Activated naive CD4-positive, alpha-beta T cell treated with anti-CD3 and anti-CD28 coated beads for 36 hours (primary cell): ENCODE measurements at regions of chr5 and their contacts with region 1.

Region 1: DNA sequence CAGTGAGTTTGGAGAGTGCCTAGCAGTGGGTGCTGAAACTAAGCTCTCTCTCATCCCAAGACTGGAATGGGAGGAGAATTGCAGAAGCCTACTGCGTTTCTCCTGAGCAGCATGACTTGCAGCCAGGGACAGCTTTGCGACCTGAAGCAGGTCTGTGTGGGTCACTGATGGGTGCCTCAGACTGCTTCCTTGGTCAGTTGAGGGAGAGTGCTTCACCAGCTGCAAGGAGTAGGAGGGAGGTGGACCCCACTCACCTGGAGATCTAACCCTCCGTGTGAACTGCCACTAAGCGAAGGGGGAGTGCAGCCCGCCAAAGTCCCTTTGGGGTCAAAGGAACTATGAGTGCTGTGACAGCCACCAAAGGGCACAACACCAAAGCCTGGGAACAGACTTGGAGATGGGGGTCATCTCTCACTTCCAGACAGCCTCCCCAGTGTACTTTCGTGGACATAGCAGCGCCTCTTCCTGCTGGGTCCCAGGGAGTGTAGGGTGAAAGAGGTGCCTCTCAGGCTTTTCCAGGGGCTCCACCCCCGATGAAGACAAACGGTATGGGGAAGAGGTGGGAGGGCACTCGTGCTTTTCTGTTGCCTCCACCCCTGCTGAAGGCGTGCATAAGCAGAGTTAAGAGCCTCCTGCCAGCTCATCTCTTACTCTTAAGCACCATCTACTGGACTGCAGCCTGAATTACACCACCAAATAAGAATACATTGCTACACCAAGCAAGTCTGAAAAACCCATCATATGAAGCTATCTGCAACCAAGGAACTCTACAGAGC is 34.3 kb upstream of the MACIR start:
- DNase-seq: peak; percentile 44
- H3K4me3 Mint-ChIP-seq: no peak overlapping the region
- H3K27ac Mint-ChIP-seq: no peak overlapping the region
- H3K4me1 Mint-ChIP-seq: no peaks in the 10 kb centered on the region
- H3K27me3 Mint-ChIP-seq: peaks cover 15% of the 10 kb centered on the region

Region 2: DNA sequence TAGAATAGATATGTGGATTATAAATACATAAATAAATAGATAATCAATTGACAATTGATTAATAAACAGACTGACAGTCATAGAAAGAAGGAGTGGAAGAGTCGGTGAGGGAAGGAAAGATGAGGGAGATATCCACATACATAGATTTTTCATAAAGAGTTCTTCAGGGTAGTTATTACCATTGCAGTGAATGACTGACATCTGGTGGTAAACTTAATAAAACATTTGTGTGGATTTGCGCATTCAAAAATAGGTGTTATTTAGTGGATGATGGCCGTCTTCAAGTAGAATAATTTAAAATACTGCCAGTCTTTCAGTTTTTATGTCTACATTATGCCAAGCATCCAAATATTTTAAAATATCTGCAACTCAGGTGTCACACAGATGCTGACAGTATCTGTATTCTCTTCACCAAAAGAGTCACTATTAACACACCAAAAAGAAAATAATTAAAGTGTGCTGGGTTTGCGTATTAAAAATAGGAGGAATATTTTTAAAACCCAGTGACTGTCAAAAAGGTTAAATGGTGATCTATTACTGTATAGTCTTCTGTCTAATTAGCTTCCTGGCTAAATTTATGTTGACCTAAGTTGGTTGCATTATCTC is 183.1 kb before region 1 on chr5:
- CTCF ChIA-PET with region 1: interaction called, 5 read pairs
- intact Hi-C with region 1: loop called (anchors 5 kb)
- DNase-seq: no peak
- H3K4me3 Mint-ChIP-seq: no peak overlapping the region
- H3K27ac Mint-ChIP-seq: no peak overlapping the region
- H3K4me1 Mint-ChIP-seq: no peaks in the 10 kb centered on the region
- H3K27me3 Mint-ChIP-seq: no peaks in the 10 kb centered on the region

Region 3: DNA sequence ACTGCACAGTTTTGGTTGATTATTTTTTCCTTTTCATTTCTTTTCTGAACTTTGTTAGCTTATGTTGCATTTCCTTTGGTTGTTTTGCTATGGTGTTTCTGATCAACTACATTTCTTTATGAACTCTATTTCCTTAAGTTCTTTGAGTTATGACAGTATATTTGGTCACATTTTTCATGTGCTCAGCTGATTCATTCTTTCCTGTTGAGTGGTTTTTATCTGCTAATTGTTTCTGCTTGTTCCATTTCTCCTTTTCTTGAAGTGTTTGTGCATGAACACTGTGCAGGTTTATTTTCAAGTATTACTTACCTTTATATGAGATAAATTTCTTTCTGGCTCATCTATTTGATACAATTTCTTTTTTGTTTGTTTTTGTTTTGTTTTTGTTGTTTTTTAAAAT is 16.7 kb before region 1 on chr5:
- CTCF ChIA-PET with region 1: interaction called, 31 read pairs
- intact Hi-C with region 1: no loop called
- DNase-seq: no peak
- H3K4me3 Mint-ChIP-seq: no peak overlapping the region
- H3K27ac Mint-ChIP-seq: no peak overlapping the region
- H3K4me1 Mint-ChIP-seq: peaks cover 24% of the 10 kb centered on the region
- H3K27me3 Mint-ChIP-seq: no peaks in the 10 kb centered on the region

Region 4: GRCh38 chr5:103356350-103357091 is 132.2 kb after region 1 on chr5:
- CTCF ChIA-PET with region 1: no interaction called
- intact Hi-C with region 1: no loop called
- DNase-seq: no peak
- H3K4me3 Mint-ChIP-seq: no peak overlapping the region
- H3K27ac Mint-ChIP-seq: peak overlapping the region; percentile 34
- H3K4me1 Mint-ChIP-seq: peaks cover 8% of the 10 kb centered on the region
- H3K27me3 Mint-ChIP-seq: peaks cover 10% of the 10 kb centered on the region

Region 5: DNA sequence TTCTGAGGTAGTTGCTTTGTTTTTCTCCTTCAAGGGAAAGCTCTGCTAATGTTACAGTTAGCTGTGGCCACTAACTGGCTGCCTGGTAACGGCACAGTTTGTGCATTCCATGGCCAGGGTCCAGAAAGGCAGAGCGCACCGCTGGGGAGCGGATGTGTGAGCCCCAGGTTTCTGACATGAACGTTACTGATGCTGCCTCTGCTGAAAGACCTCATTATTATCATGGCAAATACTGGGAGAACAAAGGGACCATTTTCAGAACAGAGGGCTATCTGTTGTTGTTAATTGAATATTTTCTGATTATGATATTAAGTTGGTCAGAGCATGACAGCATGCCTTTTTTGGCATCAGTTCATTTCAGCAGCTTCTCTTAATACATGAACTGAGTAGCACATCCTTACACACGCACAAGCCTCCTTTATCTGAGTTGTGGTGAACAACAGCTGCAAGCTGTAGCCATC is 204.1 kb after region 1 on chr5:
- CTCF ChIA-PET with region 1: no interaction called
- intact Hi-C with region 1: no loop called
- DNase-seq: no peak
- H3K4me3 Mint-ChIP-seq: no peak overlapping the region
- H3K27ac Mint-ChIP-seq: no peak overlapping the region
- H3K4me1 Mint-ChIP-seq: no peaks in the 10 kb centered on the region
- H3K27me3 Mint-ChIP-seq: peaks cover 7% of the 10 kb centered on the region